ENCODE measurements at regions of chr15 and their contacts with region 1.

Region 1: DNA sequence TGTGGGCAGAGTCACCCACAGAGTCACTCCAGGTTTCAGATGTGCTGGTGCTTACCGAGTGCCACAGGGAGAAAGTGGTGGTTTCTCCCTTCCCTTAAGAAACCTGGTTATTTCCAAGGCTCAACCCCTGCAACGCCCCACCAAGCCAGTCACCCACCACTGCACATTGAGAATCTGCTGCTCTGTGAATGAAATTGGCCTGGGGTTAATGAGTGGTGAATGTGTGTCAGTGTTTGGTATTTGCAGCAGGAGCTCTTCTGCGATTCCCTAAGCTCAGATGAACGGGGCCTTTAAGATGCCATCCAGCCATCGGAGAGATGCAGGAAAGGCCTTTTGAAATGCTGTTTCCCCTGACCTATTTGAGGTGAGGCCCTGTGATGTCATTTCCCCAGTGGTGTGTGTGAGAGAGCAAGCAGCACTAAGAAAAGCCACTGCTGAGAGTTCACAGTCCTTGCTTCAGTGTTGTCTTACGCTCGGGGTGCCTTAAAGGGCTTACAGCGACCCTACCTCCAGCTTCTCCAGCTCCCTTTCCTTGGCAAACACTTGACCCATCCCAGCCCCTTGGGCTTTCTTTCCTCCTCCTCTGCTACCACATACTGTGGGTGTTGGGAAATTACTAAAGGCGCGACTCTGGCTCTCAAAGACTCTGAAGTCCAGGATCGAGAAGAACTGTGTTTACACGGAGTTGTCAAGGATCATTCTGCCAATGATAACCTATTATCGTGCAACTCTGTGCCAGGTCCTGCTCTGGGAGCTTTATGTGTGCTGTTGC is 68.9 kb downstream of the SMAD3 start:
- DNase-seq: peak; percentile 68
- H3K4me3 ChIP-seq: no peak overlapping the region
- H3K27ac ChIP-seq: peak overlapping the region; percentile 64
- H3K4me1 ChIP-seq: peaks cover 30% of the 10 kb centered on the region
- H3K27me3 ChIP-seq: no peaks in the 10 kb centered on the region
- CTCF ChIP-seq: no peak

Region 2: GRCh38 chr15:67059127-67059553 is 75.1 kb before region 1 on chr15:
- CTCF ChIA-PET with region 1: interaction called, 10 read pairs
- dilution Hi-C with region 1: no loop called
- in situ Hi-C with region 1: no loop called
- intact Hi-C with region 1: no loop called
- DNase-seq: no peak
- H3K4me3 ChIP-seq: no peak overlapping the region
- H3K27ac ChIP-seq: no peak overlapping the region
- H3K4me1 ChIP-seq: no peaks in the 10 kb centered on the region
- H3K27me3 ChIP-seq: no peaks in the 10 kb centered on the region
- CTCF ChIP-seq: no peak

Region 3: GRCh38 chr15:67670647-67671305 is 536.5 kb after region 1 on chr15:
- CTCF ChIA-PET with region 1: no interaction called
- dilution Hi-C with region 1: no loop called
- in situ Hi-C with region 1: no loop called
- intact Hi-C with region 1: no loop called
- DNase-seq: no peak
- H3K4me3 ChIP-seq: no peak overlapping the region
- H3K27ac ChIP-seq: no peak overlapping the region
- H3K4me1 ChIP-seq: no peaks in the 10 kb centered on the region
- H3K27me3 ChIP-seq: no peaks in the 10 kb centered on the region
- CTCF ChIP-seq: no peak

Measured in mammary epithelial cell (primary cell).